ENCODE measurements at regions of chr1 and their contacts with region 1.

Region 1: DNA sequence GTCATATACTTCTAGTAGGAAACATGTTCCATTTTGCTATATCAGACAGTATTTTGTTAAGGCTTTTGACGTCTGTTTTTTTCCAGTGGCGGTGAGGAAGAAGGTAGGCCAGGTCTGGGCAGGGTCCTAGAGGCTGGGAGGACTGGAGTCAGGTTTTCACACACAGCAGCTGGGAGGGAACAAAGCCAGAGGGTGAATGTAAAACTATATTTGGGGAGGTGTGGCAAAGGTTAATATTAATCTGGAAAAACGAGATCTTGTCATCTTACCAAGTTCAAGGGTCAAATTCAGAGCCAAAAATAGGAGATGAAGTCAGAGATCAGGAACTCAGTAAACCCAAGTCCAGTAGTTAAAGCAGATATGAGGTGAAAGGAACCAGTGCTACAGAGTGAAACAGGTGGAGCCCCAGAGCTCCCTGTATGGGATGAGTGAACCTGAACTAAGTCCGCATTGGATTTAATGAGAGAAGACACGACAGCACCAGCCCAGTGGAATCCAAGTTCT is 10.7 kb upstream of the OTUD7B start:
- DNase-seq: no peak
- ATAC-seq: no peak
- H3K4me3 ChIP-seq: no peak overlapping the region
- H3K4me3 Mint-ChIP-seq: no peak overlapping the region
- H3K27ac ChIP-seq: no peak overlapping the region
- H3K27ac Mint-ChIP-seq: no peak overlapping the region
- H3K4me1 ChIP-seq: no peaks in the 10 kb centered on the region
- H3K4me1 Mint-ChIP-seq: no peaks in the 10 kb centered on the region
- H3K27me3 ChIP-seq: no peaks in the 10 kb centered on the region
- H3K27me3 Mint-ChIP-seq: no peaks in the 10 kb centered on the region
- CTCF ChIP-seq: no peak

Region 2: GRCh38 chr1:150003801-150004200 is 17.4 kb before region 1 on chr1:
- CTCF ChIA-PET with region 1: no interaction called
- POLR2A ChIA-PET with region 1: no interaction called
- intact Hi-C with region 1: loop called in 1 of 2 experiments (anchors 2 kb)
- DNase-seq: no peak
- ATAC-seq: no peak
- H3K4me3 ChIP-seq: no peak overlapping the region
- H3K4me3 Mint-ChIP-seq: no peak overlapping the region
- H3K27ac ChIP-seq: no peak overlapping the region
- H3K27ac Mint-ChIP-seq: no peak overlapping the region
- H3K4me1 ChIP-seq: peaks cover 2% of the 10 kb centered on the region
- H3K4me1 Mint-ChIP-seq: peaks cover 11% of the 10 kb centered on the region
- H3K27me3 ChIP-seq: no peaks in the 10 kb centered on the region
- H3K27me3 Mint-ChIP-seq: no peaks in the 10 kb centered on the region
- CTCF ChIP-seq: no peak

Region 3: DNA sequence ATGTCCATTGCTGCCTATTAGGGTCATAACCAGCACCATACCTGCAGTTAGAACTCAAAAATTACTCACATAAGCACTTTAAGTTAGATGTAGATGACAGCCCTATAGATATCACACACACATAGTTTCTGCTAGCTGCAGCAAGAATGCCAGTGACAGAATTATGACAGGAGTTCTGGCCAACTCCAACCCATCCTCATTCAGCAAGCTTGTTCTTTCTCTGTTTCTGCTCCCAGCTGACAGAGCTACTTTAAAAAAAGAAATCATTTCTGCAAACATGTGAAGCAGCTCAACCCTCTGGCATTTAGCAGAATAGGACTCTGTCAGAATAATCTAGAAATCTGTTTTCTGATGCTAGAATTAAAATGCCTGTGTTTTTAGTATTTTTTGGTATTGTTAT is 13.1 kb after region 1 on chr1:
- CTCF ChIA-PET with region 1: no interaction called
- POLR2A ChIA-PET with region 1: no interaction called
- intact Hi-C with region 1: loop called in 1 of 2 experiments (anchors 1 kb)
- DNase-seq: no peak
- ATAC-seq: no peak
- H3K4me3 ChIP-seq: no peak overlapping the region
- H3K4me3 Mint-ChIP-seq: no peak overlapping the region
- H3K27ac ChIP-seq: no peak overlapping the region
- H3K27ac Mint-ChIP-seq: no peak overlapping the region
- H3K4me1 ChIP-seq: no peaks in the 10 kb centered on the region
- H3K4me1 Mint-ChIP-seq: no peaks in the 10 kb centered on the region
- H3K27me3 ChIP-seq: no peaks in the 10 kb centered on the region
- H3K27me3 Mint-ChIP-seq: no peaks in the 10 kb centered on the region
- CTCF ChIP-seq: no peak

Measured in CD8-positive, alpha-beta T cell (primary cell).